Panc1 (cell line): ENCODE measurements at regions of chr6 and their contacts with region 1.

Region 1: GRCh38 chr6:28695715-28696114 is 170.0 kb downstream of the GPX5 start:
- DNase-seq: no peak
- ATAC-seq: peak; percentile 89
- H3K4me3 ChIP-seq: peak overlapping the region; percentile 67 to 92
- H3K27ac ChIP-seq: no peak overlapping the region
- H3K4me1 ChIP-seq: peaks cover 21% of the 10 kb centered on the region
- H3K27me3 ChIP-seq: no peaks in the 10 kb centered on the region; the same call in 1 of the 2 replicates
- CTCF ChIP-seq: no peak

Region 2: DNA sequence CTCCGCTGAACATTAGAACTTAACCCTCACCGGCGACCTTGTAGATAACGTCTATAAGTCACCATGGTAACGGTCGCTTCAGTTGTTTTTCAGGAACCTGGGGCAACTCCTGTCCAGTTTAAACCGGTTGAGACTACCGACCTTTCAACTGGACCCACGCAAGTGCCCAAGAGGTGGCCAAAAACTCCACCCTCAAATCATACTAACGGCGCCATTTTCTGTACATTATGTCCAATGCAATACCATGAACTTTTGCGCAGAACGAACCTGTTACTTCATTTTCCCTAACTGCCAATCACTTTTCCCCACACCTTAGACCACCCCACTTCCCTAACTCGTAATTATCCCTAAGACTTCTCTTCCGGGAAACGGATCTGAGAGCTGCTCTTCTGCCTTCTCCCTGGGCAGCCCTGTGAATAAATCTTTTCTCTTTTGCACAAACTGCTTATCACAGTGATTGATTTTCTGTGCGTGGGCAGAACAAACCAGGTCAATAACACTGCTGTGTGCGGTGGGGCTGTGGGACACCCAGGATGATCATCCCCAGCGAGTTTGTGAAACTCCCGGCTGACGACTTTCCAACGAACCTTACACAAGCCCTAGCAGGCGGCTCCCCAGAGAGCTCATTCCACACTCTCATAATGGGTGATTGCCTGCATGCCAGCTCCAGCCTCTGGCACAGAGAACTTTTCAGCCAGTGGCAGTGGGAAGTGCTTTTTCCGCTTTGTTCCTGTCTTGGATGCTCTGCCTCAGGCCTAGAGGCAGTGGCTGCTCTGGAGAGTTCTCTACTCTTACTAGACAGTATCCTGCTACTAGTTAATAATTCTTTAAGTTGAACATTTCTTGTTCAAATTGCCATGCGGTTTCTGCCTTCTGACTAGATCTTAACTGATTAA is 141.5 kb before region 1 on chr6:
- CTCF ChIA-PET with region 1: no interaction called
- POLR2A ChIA-PET with region 1: no interaction called
- in situ Hi-C with region 1: no loop called
- intact Hi-C with region 1: no loop called
- DNase-seq: no peak
- ATAC-seq: no peak
- H3K4me3 ChIP-seq: no peak overlapping the region
- H3K27ac ChIP-seq: no peak overlapping the region
- H3K4me1 ChIP-seq: no peaks in the 10 kb centered on the region
- H3K27me3 ChIP-seq: peaks cover 26% of the 10 kb centered on the region
- CTCF ChIP-seq: no peak

Region 3: GRCh38 chr6:28729501-28730402 is 34.0 kb after region 1 on chr6:
- CTCF ChIA-PET with region 1: no interaction called
- POLR2A ChIA-PET with region 1: no interaction called
- in situ Hi-C with region 1: loop called (anchors 5 kb)
- intact Hi-C with region 1: no loop called
- DNase-seq: no peak
- ATAC-seq: no peak
- H3K4me3 ChIP-seq: peak overlapping the region; percentile 89 to 96; a peak in 3 of 4 replicates
- H3K27ac ChIP-seq: no peak overlapping the region
- H3K4me1 ChIP-seq: peaks cover 31% of the 10 kb centered on the region
- H3K27me3 ChIP-seq: 0 out of 2 replicates have a peak, but pooled peaks cover 2% of the 10 kb centered on the region
- CTCF ChIP-seq: no peak

Region 4: DNA sequence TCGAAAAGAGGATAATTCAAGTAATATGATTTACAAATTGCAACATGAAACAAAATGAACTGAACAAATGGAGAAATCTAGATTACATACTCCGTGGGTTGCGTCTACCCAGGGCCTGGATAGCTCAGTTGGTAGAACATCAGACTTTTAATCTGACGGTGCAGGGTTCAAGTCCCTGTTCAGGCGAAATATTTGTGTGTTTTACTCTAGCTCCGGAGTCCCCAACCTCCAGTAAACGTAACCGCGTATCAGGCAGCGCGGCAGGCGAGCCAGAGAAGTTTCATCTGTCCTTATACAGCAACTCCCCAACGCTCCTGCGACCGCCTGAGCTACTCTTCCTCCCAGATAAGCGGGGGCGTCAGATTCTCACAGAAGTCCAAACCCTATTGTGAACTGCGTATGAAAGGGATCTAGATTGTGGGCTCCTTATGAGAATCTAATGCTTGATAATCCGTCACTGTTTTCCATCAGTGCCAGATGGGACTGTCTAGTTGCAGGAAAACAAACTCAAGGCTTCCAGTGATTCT is 52.0 kb after region 1 on chr6:
- CTCF ChIA-PET with region 1: no interaction called
- POLR2A ChIA-PET with region 1: interaction called, 4 read pairs
- in situ Hi-C with region 1: no loop called
- intact Hi-C with region 1: loop called (anchors 10 kb)
- DNase-seq: peak; percentile 95
- ATAC-seq: peak; percentile 99
- H3K4me3 ChIP-seq: peak overlapping the region; percentile 65 to 88
- H3K27ac ChIP-seq: no peak overlapping the region
- H3K4me1 ChIP-seq: peaks cover 21% of the 10 kb centered on the region
- H3K27me3 ChIP-seq: no peaks in the 10 kb centered on the region
- CTCF ChIP-seq: no peak